Activated B cell treated with CpG ODN at 0.5 μM for 24 hours (primary cell): ENCODE measurements at regions of chr1 and their contacts with region 1.

Region 1: GRCh38 chr1:1890506-1891348 is at the start of gene GNB1:
- DNase-seq: peak; percentile 96
- ATAC-seq: peak; percentile 59
- H3K4me3 Mint-ChIP-seq: peak within 1 kb of the TSS; percentile 86
- H3K27ac Mint-ChIP-seq: peak within 1 kb of the TSS; percentile 95
- H3K4me1 Mint-ChIP-seq: peaks cover 66% of the 10 kb centered on the region
- H3K27me3 Mint-ChIP-seq: no peaks in the 10 kb centered on the region
- CTCF ChIP-seq: no peak
- total RNA-seq, gene GNB1: 266 and 302 TPM in 2 replicates

Region 2: DNA sequence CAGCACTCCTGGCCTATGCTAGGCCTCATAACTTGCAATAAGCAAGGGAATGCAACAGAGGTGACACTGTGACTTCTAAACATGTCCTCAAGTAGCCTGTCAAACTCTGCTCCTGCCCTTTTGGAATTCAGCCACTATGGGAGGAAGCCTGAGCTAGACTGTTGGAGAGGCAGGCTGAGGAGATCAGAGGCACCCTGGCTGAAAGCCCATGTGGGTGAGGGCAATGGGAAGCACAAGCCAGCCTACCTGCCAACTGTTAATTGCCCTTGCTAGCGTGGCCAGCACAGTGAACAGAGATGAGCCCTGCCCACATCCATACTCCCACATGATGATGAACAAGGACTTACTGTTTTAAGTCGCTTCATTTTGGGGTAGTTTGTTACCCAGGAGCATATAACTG is 17.5 kb before region 1 on chr1:
- CTCF ChIA-PET with region 1: interaction called, 4 read pairs
- POLR2A ChIA-PET with region 1: interaction called, 15 read pairs
- intact Hi-C with region 1: no loop called
- DNase-seq: no peak
- ATAC-seq: no peak
- H3K4me3 Mint-ChIP-seq: no peak overlapping the region
- H3K27ac Mint-ChIP-seq: no peak overlapping the region
- H3K4me1 Mint-ChIP-seq: peaks cover 77% of the 10 kb centered on the region
- H3K27me3 Mint-ChIP-seq: no peaks in the 10 kb centered on the region
- CTCF ChIP-seq: no peak

Region 3: GRCh38 chr1:3336641-3337637 is 1446.2 kb after region 1 on chr1:
- CTCF ChIA-PET with region 1: no interaction called
- POLR2A ChIA-PET with region 1: no interaction called
- intact Hi-C with region 1: no loop called
- DNase-seq: no peak
- ATAC-seq: no peak
- H3K4me3 Mint-ChIP-seq: no peak overlapping the region
- H3K27ac Mint-ChIP-seq: no peak overlapping the region
- H3K4me1 Mint-ChIP-seq: no peaks in the 10 kb centered on the region
- H3K27me3 Mint-ChIP-seq: no peaks in the 10 kb centered on the region
- CTCF ChIP-seq: no peak